Activated T-helper 1 cell treated with anti-CD3 and anti-CD28 coated beads, Interleukin-12 subunit alpha, Interleukin-12 subunit beta, Interleukin-2, Interleukin-4 antibody, amounts not matched to agents 30 ng/mL and 10 ng/mL and 1 ng/mL, durations not matched to agents 14 hours and 24 hours and 36 hours (primary cell): ENCODE measurements at regions of chr3 and their contacts with region 1.

Region 1: GRCh38 chr3:147572970-147573340 is 163.8 kb downstream of the ZIC1 start:
- DNase-seq: no peak
- H3K4me3 Mint-ChIP-seq: no peak overlapping the region
- H3K27ac Mint-ChIP-seq: no peak overlapping the region
- H3K4me1 Mint-ChIP-seq: no peaks in the 10 kb centered on the region
- H3K27me3 Mint-ChIP-seq: no peaks in the 10 kb centered on the region

Region 2: DNA sequence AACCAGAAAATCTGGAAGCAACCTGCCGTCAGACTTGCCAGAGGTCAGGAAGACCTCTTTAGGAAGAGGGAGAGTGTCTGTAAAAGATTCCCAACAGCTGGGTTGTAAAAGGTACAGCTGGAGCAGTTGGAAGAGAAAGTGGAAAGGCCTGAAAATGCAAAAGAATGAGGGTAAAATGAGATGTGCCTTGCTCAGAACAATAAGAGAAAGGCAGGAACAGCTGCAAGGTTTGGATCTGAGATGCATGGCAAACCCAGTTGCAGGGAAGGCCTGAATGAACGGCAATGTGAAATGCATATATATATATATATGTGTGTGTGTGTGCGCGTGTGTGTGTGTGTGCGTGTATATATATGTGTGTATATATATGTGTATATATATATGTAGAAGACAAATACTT is 75.7 kb before region 1 on chr3:
- intact Hi-C with region 1: loop called (anchors 2 kb)
- DNase-seq: no peak
- H3K4me3 Mint-ChIP-seq: no peak overlapping the region
- H3K27ac Mint-ChIP-seq: no peak overlapping the region
- H3K4me1 Mint-ChIP-seq: no peaks in the 10 kb centered on the region
- H3K27me3 Mint-ChIP-seq: no peaks in the 10 kb centered on the region

Region 3: GRCh38 chr3:147554332-147554731 is 18.6 kb before region 1 on chr3:
- intact Hi-C with region 1: no loop called
- DNase-seq: no peak
- H3K4me3 Mint-ChIP-seq: no peak overlapping the region
- H3K27ac Mint-ChIP-seq: no peak overlapping the region
- H3K4me1 Mint-ChIP-seq: no peaks in the 10 kb centered on the region
- H3K27me3 Mint-ChIP-seq: no peaks in the 10 kb centered on the region